CD4-positive, alpha-beta T cell (primary cell): ENCODE measurements at regions of chr3 and their contacts with region 1.

Region 1: DNA sequence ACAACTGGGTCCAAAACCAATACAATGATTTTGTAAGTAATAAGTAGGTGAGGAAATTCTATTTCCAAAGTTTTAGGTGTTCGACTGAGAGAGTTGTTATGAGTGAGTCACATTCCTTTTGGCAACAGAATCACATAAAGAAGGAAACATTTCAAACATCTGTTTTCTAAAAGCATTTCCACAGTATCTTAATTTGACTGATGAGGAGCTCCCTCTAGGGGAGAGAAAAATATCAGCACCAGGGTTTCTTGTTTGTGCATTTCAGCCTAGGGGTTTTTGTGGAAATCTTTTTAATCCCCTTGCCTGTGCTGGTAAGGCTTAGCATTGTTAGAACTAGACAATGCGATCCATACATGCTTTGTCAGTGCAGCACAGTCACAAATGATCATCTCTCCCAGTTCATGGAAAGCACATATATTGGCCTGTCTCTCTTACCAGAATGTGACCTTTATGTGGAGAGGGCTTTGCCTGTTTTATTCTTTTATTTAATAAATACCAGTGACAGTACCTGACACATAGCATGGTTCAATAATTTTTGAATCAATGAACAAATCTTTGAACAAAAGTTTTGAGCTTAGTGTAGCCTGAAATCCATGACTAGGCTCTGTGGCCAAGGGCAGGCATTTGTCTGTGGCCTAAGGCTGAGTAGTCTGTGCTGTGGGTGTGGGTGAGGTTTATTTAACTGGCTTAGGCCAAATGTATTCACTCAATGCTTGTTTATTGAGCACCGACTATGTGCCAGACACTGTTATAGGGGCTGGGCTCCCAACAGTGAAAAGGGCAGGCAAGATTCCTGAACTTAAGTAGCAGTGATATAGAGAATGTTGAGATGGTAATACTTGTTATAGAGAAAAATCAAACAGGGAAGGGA is 21.1 kb upstream of the IQCF6 start:
- DNase-seq: peak in 5 of 14 experiments; percentile 9 to 69 (median 67)
- ATAC-seq: peak; percentile 54
- H3K4me3 ChIP-seq: no peak overlapping the region
- H3K4me3 Mint-ChIP-seq: no peak overlapping the region
- H3K27ac ChIP-seq: no peak overlapping the region
- H3K27ac Mint-ChIP-seq: no peak overlapping the region
- H3K4me1 ChIP-seq: peaks cover 2% of the 10 kb centered on the region
- H3K4me1 Mint-ChIP-seq: peaks cover 10% of the 10 kb centered on the region
- H3K27me3 ChIP-seq: no peaks in the 10 kb centered on the region
- H3K27me3 Mint-ChIP-seq: peaks cover 11% of the 10 kb centered on the region
- CTCF ChIP-seq: peak; percentile 77

Region 2: DNA sequence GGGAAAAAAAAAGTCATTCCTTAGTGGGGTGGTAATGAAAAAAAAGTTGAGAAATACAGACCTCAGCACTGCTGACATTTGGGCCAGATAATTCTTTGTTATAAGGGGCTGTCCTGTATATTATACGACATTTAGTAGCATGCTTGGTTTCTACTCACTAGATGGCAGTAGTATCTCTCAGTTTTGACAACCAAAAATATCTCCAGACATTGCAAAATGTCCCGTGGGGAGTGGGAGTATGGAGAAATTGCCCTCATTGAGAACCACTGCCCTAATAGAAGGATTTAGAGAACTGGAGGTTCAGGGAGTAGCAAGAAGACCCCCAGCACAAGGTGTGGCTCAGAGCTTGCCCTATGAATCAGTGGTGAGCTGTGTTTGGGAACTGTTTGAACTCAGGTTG is 157.7 kb before region 1 on chr3:
- CTCF ChIA-PET with region 1: interaction called, 3 read pairs
- POLR2A ChIA-PET with region 1: no interaction called
- intact Hi-C with region 1: loop called in 1 of 2 experiments (anchors 2 kb)
- DNase-seq: peak in 3 of 14 experiments; percentile 36 to 40 (median 36)
- ATAC-seq: no peak
- H3K4me3 ChIP-seq: no peak overlapping the region
- H3K4me3 Mint-ChIP-seq: no peak overlapping the region
- H3K27ac ChIP-seq: no peak overlapping the region
- H3K27ac Mint-ChIP-seq: no peak overlapping the region
- H3K4me1 ChIP-seq: no peaks in the 10 kb centered on the region
- H3K4me1 Mint-ChIP-seq: no peaks in the 10 kb centered on the region
- H3K27me3 ChIP-seq: no peaks in the 10 kb centered on the region
- H3K27me3 Mint-ChIP-seq: no peaks in the 10 kb centered on the region
- CTCF ChIP-seq: peak; percentile 35